ENCODE measurements at regions of chr1 and their contacts with region 1.

Region 1: DNA sequence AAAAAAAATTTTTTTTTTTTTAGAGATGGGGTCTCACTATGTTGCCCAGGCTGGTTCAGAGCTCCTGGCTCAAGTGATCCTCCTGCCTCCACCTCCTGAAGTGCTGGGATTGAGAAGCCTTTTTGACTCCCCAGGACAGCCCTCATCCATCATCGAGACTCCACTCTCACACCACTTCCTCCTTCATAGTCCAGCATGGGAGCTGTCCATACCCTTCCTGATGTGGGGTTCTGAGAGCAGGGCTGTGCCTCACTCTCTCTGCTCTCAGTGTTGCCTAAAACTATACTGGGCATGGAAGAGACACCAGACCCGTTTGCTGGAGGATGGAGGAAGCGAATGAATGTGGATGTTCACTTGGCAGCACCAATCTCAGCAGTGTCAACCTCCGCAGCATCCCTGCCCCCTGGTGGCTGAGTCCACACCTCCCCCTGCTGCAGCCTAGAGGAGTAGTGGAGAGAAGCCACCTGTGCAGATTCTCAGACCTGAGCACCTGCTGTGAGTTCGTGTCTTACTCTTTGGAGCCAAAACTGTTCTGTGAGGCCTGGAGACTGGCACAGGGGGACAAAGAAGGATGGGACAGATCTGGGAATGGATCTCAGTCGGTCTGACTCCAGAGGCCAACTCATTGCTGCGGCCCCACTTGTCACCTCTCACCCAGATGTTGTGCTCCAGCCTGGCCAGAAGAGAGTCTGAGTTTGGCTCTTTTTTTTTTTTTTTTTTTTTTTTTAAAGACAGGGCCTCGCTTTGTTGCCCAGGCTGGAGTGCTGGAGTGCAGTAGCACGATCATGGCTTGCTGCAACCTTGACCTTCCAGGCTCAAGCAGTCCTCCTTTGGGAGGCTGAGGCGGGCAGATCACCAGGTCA is 17.7 kb downstream of the TINAGL1 start:
- DNase-seq: peak; percentile 76
- H3K4me3 ChIP-seq: peak overlapping the region in 1 of 2 experiments; percentile 0; a peak in 1 of 4 replicates
- H3K27ac ChIP-seq: no peak overlapping the region
- H3K4me1 ChIP-seq: peaks cover 9 to 10% of the 10 kb centered on the region in 2 experiments
- H3K27me3 ChIP-seq: no peaks in the 10 kb centered on the region
- CTCF ChIP-seq: peak; percentile 90
- EP300 ChIP-seq: no peak
- RAD21 ChIP-seq: peak; percentile 72

Region 2: DNA sequence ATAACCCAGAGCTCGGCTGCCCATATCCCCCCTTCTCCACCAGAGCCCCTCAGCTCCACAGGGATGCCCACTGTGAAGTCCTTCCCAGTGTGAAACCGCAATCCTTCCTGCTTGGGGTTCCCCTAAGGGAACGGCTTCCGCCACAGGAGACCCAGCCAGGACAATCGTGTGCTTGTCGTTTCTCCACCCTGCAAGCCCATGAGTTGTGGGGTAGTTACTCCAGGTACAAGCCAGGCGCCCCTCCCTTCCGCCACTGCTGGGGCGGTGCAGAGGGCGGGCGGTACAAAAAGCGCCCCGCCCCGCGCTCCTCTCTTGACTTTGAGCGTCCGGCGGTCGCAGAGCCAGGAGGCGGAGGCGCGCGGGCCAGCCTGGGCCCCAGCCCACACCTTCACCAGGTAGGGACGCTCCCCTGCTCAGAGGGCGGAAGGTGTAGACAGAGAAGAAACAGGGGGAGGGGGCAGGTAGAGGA is 17.8 kb before region 1 on chr1 and contains the start of gene TINAGL1:
- CTCF ChIA-PET with region 1: interaction called, 21 read pairs
- POLR2A ChIA-PET with region 1: no interaction called
- DNase-seq: no peak
- H3K4me3 ChIP-seq: no peak within 1 kb of the TSS
- H3K27ac ChIP-seq: no peak within 1 kb of the TSS
- H3K4me1 ChIP-seq: peaks cover 14 to 17% of the 10 kb centered on the region in 2 experiments; a peak in 3 of 4 replicates
- H3K27me3 ChIP-seq: no peaks in the 10 kb centered on the region
- CTCF ChIP-seq: no peak
- EP300 ChIP-seq: no peak
- RAD21 ChIP-seq: no peak
- polyA plus RNA-seq, gene TINAGL1: 0.23 TPM in 1 of 2 replicates, not detected in the other